ENCODE measurements at regions of chr16 and their contacts with region 1.

Region 1: GRCh38 chr16:72972878-72973571 is 74.9 kb downstream of the ZFHX3 start:
- DNase-seq: no peak
- H3K4me3 ChIP-seq: no peak overlapping the region
- H3K27ac ChIP-seq: no peak overlapping the region
- H3K4me1 ChIP-seq: peaks cover 0 to 3% (median 0%) of the 10 kb centered on the region in 4 donors
- H3K27me3 ChIP-seq: no peaks in the 10 kb centered on the region
- CTCF ChIP-seq: no peak
- EP300 ChIP-seq: no peak
- POLR2A ChIP-seq: no peak

Region 2: DNA sequence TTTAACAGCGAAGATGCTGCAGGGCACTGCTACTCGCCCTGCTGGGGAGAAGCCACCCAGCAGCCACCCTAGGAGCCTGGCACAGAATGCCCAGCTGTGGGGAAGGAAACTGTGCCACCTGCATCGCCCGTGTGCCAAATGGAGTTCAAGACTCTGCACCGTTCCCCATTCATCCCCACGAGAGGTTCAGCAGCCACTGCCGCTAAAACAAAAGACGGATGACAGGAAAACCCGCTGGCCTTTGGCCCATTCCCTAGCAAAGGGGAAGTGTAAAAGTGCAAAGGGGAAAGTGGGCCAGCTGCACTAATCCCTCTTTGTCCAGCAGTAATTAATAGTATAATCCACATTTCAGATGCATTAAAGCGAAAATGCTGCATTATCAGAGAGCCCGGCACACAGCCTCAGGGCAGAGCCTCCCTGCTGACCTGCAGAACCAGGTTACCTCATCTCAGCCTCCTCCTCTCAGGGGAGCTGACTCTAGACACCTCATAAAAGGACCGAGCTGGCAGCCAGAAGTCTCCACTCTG is 37.2 kb after region 1 on chr16:
- in situ Hi-C with region 1: no loop called
- intact Hi-C with region 1: loop called (anchors 1 kb)
- DNase-seq: no peak
- H3K4me3 ChIP-seq: no peak overlapping the region
- H3K27ac ChIP-seq: no peak overlapping the region
- H3K4me1 ChIP-seq: peaks cover under 1 to 9% (median 5%) of the 10 kb centered on the region in 4 donors
- H3K27me3 ChIP-seq: no peaks in the 10 kb centered on the region
- CTCF ChIP-seq: no peak
- EP300 ChIP-seq: no peak
- POLR2A ChIP-seq: no peak

Region 3: GRCh38 chr16:73161977-73162376 is 189.0 kb after region 1 on chr16:
- in situ Hi-C with region 1: no loop called
- intact Hi-C with region 1: no loop called
- DNase-seq: no peak
- H3K4me3 ChIP-seq: no peak overlapping the region
- H3K27ac ChIP-seq: no peak overlapping the region
- H3K4me1 ChIP-seq: peaks cover 0 to 6% (median 0%) of the 10 kb centered on the region in 4 donors
- H3K27me3 ChIP-seq: no peaks in the 10 kb centered on the region
- CTCF ChIP-seq: no peak
- EP300 ChIP-seq: no peak
- POLR2A ChIP-seq: no peak